B cell (primary cell): ENCODE measurements at regions of chr17 and their contacts with region 1.

Region 1: GRCh38 chr17:50865984-50866774 is at the start of gene TOB1:
- DNase-seq: peak; percentile 98
- ATAC-seq: peak; percentile 76
- H3K4me3 ChIP-seq: peak within 1 kb of the TSS; percentile 82 to 98 (median 93)
- H3K4me3 Mint-ChIP-seq: peak within 1 kb of the TSS; percentile 97
- H3K27ac ChIP-seq: peak within 1 kb of the TSS; percentile 95 to 97
- H3K27ac Mint-ChIP-seq: peak within 1 kb of the TSS; percentile 99
- H3K4me1 ChIP-seq: peaks cover 18 to 20% of the 10 kb centered on the region in 2 donors
- H3K4me1 Mint-ChIP-seq: peaks cover 41% of the 10 kb centered on the region
- H3K27me3 ChIP-seq: no peaks in the 10 kb centered on the region
- H3K27me3 Mint-ChIP-seq: no peaks in the 10 kb centered on the region
- CTCF ChIP-seq: no peak
- total RNA-seq, gene TOB1: 28.9 and 36.5 TPM in 2 replicates

Region 2: DNA sequence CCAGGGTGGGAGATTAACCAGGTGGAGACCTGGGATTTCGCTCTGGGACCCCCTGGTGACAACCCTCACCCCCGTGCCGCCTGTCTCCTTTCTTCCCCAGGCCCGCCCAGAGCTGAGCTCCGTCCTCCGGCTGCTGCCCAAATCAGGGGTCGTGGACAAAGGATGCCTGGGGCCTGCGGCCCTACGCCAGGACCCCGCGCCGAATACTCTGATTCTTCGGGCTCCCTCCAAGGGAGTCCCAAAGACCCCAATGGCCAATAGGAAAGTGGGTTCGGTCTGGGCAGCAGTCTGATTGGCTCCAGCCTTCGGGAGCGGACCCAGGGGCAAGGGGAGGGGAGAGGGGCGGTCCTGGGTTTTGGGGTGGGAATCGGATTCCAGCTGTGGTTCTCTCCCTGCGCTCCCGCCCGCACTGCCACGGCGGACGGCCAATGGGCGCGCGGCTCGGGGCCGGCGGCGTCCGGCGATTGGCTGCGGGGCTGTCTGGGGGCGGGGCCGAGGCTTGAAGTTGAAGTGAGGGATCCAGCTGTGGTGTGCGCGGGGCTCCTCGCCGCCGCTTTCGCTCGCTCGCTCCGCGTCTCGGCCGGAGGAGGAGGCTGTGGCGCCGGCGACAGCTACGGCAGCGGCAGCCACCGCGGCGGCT is 305.9 kb before region 1 on chr17 and contains the start of gene CACNA1G:
- CTCF ChIA-PET with region 1: no interaction called
- POLR2A ChIA-PET with region 1: no interaction called
- intact Hi-C with region 1: loop called (anchors 2 kb)
- DNase-seq: peak; percentile 90
- ATAC-seq: peak; percentile 89
- H3K4me3 ChIP-seq: peak within 1 kb of the TSS in 4 of 5 experiments; percentile 43 to 70 (median 60)
- H3K4me3 Mint-ChIP-seq: peak within 1 kb of the TSS; percentile 87
- H3K27ac ChIP-seq: no peak within 1 kb of the TSS
- H3K27ac Mint-ChIP-seq: no peak within 1 kb of the TSS
- H3K4me1 ChIP-seq: peaks cover 34 to 40% of the 10 kb centered on the region in 2 donors
- H3K4me1 Mint-ChIP-seq: peaks cover 30% of the 10 kb centered on the region
- H3K27me3 ChIP-seq: peaks cover 0 to 85% (median 37%) of the 10 kb centered on the region in 4 experiments
- H3K27me3 Mint-ChIP-seq: peaks cover 29% of the 10 kb centered on the region
- CTCF ChIP-seq: no peak
- total RNA-seq, gene CACNA1G: 0.05 and 0.12 TPM in 2 replicates

Region 3: DNA sequence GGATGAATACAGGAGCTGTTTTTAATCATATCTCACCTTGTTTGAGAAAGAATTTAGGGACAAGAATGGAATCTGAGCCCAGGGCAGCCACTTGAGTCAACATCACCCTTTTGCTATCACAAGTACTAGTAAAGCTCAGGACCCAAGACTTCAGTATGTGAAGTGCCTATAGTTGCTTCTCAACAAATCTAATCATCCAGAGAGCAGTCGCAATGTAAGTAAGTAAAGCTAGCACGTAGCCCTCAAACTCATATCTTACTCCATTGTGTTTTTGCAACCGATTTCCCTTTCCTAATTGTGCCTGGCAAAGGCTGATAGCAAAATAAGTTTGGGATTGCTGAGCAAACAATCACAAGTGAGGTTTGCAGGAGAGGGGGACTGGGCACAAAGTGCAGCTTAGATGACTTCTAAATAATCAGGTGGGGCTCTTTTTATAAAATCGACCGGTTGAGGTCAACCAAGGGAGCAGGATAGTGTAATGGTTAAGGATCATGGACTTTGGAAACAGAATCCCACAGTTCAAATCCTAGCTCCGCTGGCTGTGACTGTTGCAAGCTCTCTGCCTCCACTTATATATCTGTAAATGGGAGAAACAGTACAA is 13.1 kb before region 1 on chr17:
- CTCF ChIA-PET with region 1: interaction called, 125 read pairs
- POLR2A ChIA-PET with region 1: interaction called, 41 read pairs
- intact Hi-C with region 1: loop called (anchors 1 kb)
- DNase-seq: no peak
- ATAC-seq: no peak
- H3K4me3 ChIP-seq: no peak overlapping the region
- H3K4me3 Mint-ChIP-seq: peak overlapping the region; percentile 65
- H3K27ac ChIP-seq: no peak overlapping the region
- H3K27ac Mint-ChIP-seq: peak overlapping the region; percentile 86
- H3K4me1 ChIP-seq: peaks cover 9 to 11% of the 10 kb centered on the region in 2 donors
- H3K4me1 Mint-ChIP-seq: peaks cover 13% of the 10 kb centered on the region
- H3K27me3 ChIP-seq: no peaks in the 10 kb centered on the region
- H3K27me3 Mint-ChIP-seq: no peaks in the 10 kb centered on the region
- CTCF ChIP-seq: no peak

Region 4: GRCh38 chr17:50931144-50931908 is 65.1 kb after region 1 on chr17:
- CTCF ChIA-PET with region 1: no interaction called
- POLR2A ChIA-PET with region 1: interaction called, 4 read pairs
- intact Hi-C with region 1: loop called (anchors 2 kb)
- DNase-seq: peak; percentile 62
- ATAC-seq: peak; percentile 74
- H3K4me3 ChIP-seq: peak overlapping the region; percentile 37 to 76 (median 53)
- H3K4me3 Mint-ChIP-seq: peak overlapping the region; percentile 92
- H3K27ac ChIP-seq: no peak overlapping the region
- H3K27ac Mint-ChIP-seq: peak overlapping the region; percentile 79
- H3K4me1 ChIP-seq: peaks cover 6 to 11% of the 10 kb centered on the region in 2 donors
- H3K4me1 Mint-ChIP-seq: peaks cover 20% of the 10 kb centered on the region
- H3K27me3 ChIP-seq: peaks cover 0 to 30% (median 10%) of the 10 kb centered on the region in 4 experiments
- H3K27me3 Mint-ChIP-seq: peaks cover 20% of the 10 kb centered on the region
- CTCF ChIP-seq: no peak

Region 5: GRCh38 chr17:50956750-50957523 is 90.8 kb after region 1 on chr17:
- CTCF ChIA-PET with region 1: interaction called, 19 read pairs
- POLR2A ChIA-PET with region 1: interaction called, 18 read pairs
- intact Hi-C with region 1: no loop called
- DNase-seq: peak; percentile 78
- ATAC-seq: peak; percentile 89
- H3K4me3 ChIP-seq: no peak overlapping the region
- H3K4me3 Mint-ChIP-seq: no peak overlapping the region
- H3K27ac ChIP-seq: no peak overlapping the region
- H3K27ac Mint-ChIP-seq: no peak overlapping the region
- H3K4me1 ChIP-seq: peaks cover 0 to 5% of the 10 kb centered on the region in 2 donors
- H3K4me1 Mint-ChIP-seq: peaks cover 2% of the 10 kb centered on the region
- H3K27me3 ChIP-seq: peaks cover 0 to 4% (median 0%) of the 10 kb centered on the region in 4 experiments
- H3K27me3 Mint-ChIP-seq: no peaks in the 10 kb centered on the region
- CTCF ChIP-seq: peak; percentile 79

Region 6: GRCh38 chr17:51120739-51121617 is 254.8 kb after region 1 on chr17 and contains the start of gene SPAG9:
- CTCF ChIA-PET with region 1: no interaction called
- POLR2A ChIA-PET with region 1: interaction called, 9 read pairs
- intact Hi-C with region 1: loop called (anchors 1 kb)
- DNase-seq: peak; percentile 96
- ATAC-seq: peak; percentile 84
- H3K4me3 ChIP-seq: peak within 1 kb of the TSS; percentile 74 to 98 (median 89)
- H3K4me3 Mint-ChIP-seq: peak within 1 kb of the TSS; percentile 98
- H3K27ac ChIP-seq: peak within 1 kb of the TSS; percentile 93 to 94
- H3K27ac Mint-ChIP-seq: peak within 1 kb of the TSS; percentile 99
- H3K4me1 ChIP-seq: peaks cover 33 to 35% of the 10 kb centered on the region in 2 donors
- H3K4me1 Mint-ChIP-seq: peaks cover 49% of the 10 kb centered on the region
- H3K27me3 ChIP-seq: no peaks in the 10 kb centered on the region
- H3K27me3 Mint-ChIP-seq: no peaks in the 10 kb centered on the region
- CTCF ChIP-seq: no peak
- total RNA-seq, gene SPAG9: 64.1 and 69.3 TPM in 2 replicates

Region 7: DNA sequence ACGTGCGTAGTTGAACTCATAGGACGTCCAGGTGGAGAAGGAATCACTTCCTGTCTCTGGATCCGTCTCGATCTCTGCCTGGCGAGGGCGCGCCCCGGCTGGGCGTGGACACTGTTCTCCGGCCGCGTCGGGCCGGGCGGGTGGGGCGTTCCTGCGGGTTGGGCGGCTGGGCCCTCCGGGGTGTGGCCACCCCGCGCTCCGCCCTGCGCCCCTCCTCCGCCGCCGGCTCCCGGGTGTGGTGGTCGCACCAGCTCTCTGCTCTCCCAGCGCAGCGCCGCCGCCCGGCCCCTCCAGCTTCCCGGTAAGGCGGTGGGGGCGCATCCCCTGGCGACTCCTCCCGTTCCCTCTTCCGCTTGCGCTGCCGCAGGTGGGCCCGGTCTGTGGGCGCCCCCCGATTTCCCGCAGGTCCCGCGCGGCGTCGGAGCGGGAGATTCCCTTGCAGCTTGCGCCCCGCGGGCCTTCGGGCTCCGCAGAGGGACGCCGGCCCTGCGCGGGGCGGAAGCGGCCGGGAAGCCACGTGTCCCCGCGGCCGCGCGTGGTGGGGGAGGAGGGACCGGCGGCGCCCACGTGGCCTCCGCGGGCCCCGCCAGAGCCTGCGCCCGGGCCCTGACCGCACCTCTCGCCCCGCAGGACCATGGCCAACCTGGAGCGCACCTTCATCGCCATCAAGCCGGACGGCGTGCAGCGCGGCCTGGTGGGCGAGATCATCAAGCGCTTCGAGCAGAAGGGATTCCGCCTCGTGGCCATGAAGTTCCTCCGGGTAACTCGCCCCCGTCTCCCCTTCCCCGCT is 300.2 kb after region 1 on chr17 and contains the start of gene NME2:
- CTCF ChIA-PET with region 1: no interaction called
- POLR2A ChIA-PET with region 1: interaction called, 5 read pairs
- intact Hi-C with region 1: loop called (anchors 5 kb)
- DNase-seq: peak; percentile 83
- ATAC-seq: peak; percentile 87
- H3K4me3 ChIP-seq: peak within 1 kb of the TSS; percentile 57 to 83 (median 74)
- H3K4me3 Mint-ChIP-seq: peak within 1 kb of the TSS; percentile 97
- H3K27ac ChIP-seq: peak within 1 kb of the TSS; percentile 56 to 77
- H3K27ac Mint-ChIP-seq: peak within 1 kb of the TSS; percentile 99
- H3K4me1 ChIP-seq: peaks cover 9 to 22% of the 10 kb centered on the region in 2 donors
- H3K4me1 Mint-ChIP-seq: peaks cover 16% of the 10 kb centered on the region
- H3K27me3 ChIP-seq: no peaks in the 10 kb centered on the region
- H3K27me3 Mint-ChIP-seq: no peaks in the 10 kb centered on the region
- CTCF ChIP-seq: no peak
- total RNA-seq, gene NME2: 154 and 169 TPM in 2 replicates